CD4-positive, alpha-beta T cell (primary cell): ENCODE measurements at regions of chr16 and their contacts with region 1.

Region 1: DNA sequence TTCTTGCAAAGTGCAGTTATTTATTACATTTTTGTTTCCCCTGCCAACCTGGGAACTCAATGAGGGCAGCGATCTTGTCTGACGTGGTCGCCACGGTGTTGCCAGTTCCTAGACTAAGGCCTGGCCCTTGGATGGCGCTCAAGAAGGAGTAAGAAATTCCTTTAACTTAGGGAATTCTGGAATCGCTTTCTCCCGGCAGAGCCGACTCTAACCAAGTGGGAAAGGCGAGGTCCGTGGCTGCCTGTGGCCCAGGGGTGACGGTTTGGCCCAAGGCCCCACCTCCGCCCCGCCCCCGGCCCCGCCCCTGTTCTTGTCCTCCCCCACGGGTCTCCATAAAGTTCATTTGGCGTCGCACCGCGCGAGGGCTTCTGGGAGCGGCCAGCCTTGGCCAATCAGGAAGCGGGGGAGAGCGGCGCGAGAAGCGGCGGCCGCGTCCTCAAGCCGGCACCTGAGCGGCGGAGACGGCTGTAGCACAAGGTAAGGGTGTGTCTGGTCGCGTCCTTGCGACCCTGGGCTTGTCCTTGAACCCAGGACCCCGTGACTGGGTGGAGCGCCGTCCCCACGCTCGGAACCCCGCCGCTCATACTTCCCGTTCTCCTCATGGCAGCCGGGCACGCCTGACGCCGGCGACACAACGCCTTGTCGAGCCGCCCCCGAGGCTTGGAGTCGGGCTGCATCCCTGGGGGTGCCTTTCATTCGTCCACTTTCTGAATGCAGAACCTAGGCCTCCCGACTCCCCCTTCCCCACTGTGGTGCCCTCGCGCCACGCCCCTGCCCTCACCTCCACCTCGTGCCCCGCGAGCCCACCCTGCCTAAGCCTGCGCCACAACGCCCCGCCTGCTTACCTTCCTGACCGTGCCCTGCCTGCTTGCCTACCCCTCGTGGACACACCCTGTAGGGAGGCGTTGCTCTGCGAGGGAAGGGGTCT is at the start of gene NUP93:
- DNase-seq: peak; percentile 81 to 96 (median 87)
- ATAC-seq: peak; percentile 93
- H3K4me3 ChIP-seq: peak within 1 kb of the TSS; percentile 99
- H3K4me3 Mint-ChIP-seq: no peak within 1 kb of the TSS
- H3K27ac ChIP-seq: peak within 1 kb of the TSS; percentile 44 to 57
- H3K27ac Mint-ChIP-seq: peak within 1 kb of the TSS; percentile 93
- H3K4me1 ChIP-seq: peaks cover 26% of the 10 kb centered on the region
- H3K4me1 Mint-ChIP-seq: peaks cover 34% of the 10 kb centered on the region
- H3K27me3 ChIP-seq: no peaks in the 10 kb centered on the region
- H3K27me3 Mint-ChIP-seq: no peaks in the 10 kb centered on the region
- CTCF ChIP-seq: no peak
- total RNA-seq, gene NUP93: 45.6 to 47.2 TPM

Region 2: GRCh38 chr16:56450986-56451752 is 278.8 kb before region 1 on chr16 and contains the starts of genes NUDT21 and OGFOD1:
- CTCF ChIA-PET with region 1: no interaction called
- POLR2A ChIA-PET with region 1: interaction called, 3 read pairs
- intact Hi-C with region 1: loop called in 1 of 2 experiments (anchors 5 kb)
- DNase-seq: peak; percentile 81 to 98 (median 88)
- ATAC-seq: peak; percentile 98
- H3K4me3 ChIP-seq: peak within 1 kb of the TSS; percentile 91
- H3K4me3 Mint-ChIP-seq: peak within 1 kb of the TSS; percentile 92
- H3K27ac ChIP-seq: peak within 1 kb of the TSS; percentile 58 to 80
- H3K27ac Mint-ChIP-seq: peak within 1 kb of the TSS; percentile 83
- H3K4me1 ChIP-seq: peaks cover 20% of the 10 kb centered on the region
- H3K4me1 Mint-ChIP-seq: peaks cover 70% of the 10 kb centered on the region
- H3K27me3 ChIP-seq: no peaks in the 10 kb centered on the region
- H3K27me3 Mint-ChIP-seq: no peaks in the 10 kb centered on the region
- CTCF ChIP-seq: no peak
- total RNA-seq, gene NUDT21: 89.6 to 96.6 TPM
- total RNA-seq, gene OGFOD1: 14.6 to 14.8 TPM

Region 3: GRCh38 chr16:56681939-56682702 is 47.9 kb before region 1 on chr16 and contains the start of gene MT1X:
- CTCF ChIA-PET with region 1: no interaction called
- POLR2A ChIA-PET with region 1: interaction called, 5 read pairs
- intact Hi-C with region 1: loop called in 1 of 2 experiments (anchors 2 kb)
- DNase-seq: peak; percentile 72 to 94 (median 86)
- ATAC-seq: peak; percentile 99
- H3K4me3 ChIP-seq: peak within 1 kb of the TSS; percentile 83
- H3K4me3 Mint-ChIP-seq: peak within 1 kb of the TSS; percentile 96
- H3K27ac ChIP-seq: peak within 1 kb of the TSS; percentile 50 to 71
- H3K27ac Mint-ChIP-seq: peak within 1 kb of the TSS; percentile 93
- H3K4me1 ChIP-seq: peaks cover 28% of the 10 kb centered on the region
- H3K4me1 Mint-ChIP-seq: peaks cover 27% of the 10 kb centered on the region
- H3K27me3 ChIP-seq: no peaks in the 10 kb centered on the region
- H3K27me3 Mint-ChIP-seq: no peaks in the 10 kb centered on the region
- CTCF ChIP-seq: no peak
- total RNA-seq, gene MT1X: 10.9 to 14.1 TPM

Region 4: GRCh38 chr16:56708525-56709442 is 21.2 kb before region 1 on chr16:
- CTCF ChIA-PET with region 1: no interaction called
- POLR2A ChIA-PET with region 1: interaction called, 16 read pairs
- intact Hi-C with region 1: loop called in 1 of 2 experiments (anchors 2 kb)
- DNase-seq: peak in 13 of 14 experiments; percentile 10 to 63 (median 41)
- ATAC-seq: peak; percentile 90
- H3K4me3 ChIP-seq: peak overlapping the region; percentile 35
- H3K4me3 Mint-ChIP-seq: peak overlapping the region; percentile 83
- H3K27ac ChIP-seq: peak overlapping the region in 1 of 2 donors; percentile 50
- H3K27ac Mint-ChIP-seq: peak overlapping the region; percentile 92
- H3K4me1 ChIP-seq: peaks cover 26% of the 10 kb centered on the region
- H3K4me1 Mint-ChIP-seq: peaks cover 28% of the 10 kb centered on the region
- H3K27me3 ChIP-seq: no peaks in the 10 kb centered on the region
- H3K27me3 Mint-ChIP-seq: no peaks in the 10 kb centered on the region
- CTCF ChIP-seq: no peak

Region 5: DNA sequence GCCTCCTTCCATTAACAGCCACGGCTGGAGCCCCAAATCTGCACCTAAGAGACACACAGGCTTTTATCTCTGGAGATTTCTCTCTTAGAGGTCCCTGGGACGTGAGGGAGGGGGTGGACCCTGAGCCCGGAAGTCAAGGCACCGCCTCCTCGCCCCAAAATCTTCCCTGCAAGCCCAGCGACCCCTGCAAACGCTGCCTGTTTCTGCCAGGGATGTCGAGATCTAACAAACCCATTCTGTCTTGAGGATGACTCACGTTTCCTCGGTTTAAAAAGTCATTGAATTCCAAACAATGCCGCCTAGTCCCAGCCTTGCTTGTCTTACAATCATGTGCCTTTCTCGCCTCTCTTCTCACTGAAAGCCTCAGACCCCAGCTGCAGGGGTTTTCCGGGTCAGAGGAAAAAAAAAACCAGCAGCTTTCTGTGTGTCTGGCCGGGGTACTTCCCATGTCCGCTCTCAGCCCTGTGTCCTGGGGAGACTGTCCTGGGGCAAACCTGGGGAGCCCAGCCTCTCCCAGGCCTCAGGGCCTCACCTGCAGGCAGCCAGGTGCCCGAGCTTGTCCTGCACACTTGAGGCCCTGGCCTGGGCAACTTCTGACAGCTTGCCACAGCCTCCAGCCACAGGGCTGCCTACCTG is 530.4 kb after region 1 on chr16:
- CTCF ChIA-PET with region 1: no interaction called
- POLR2A ChIA-PET with region 1: no interaction called
- intact Hi-C with region 1: loop called in 1 of 2 experiments (anchors 10 kb)
- DNase-seq: peak in 10 of 14 experiments; percentile 13 to 76 (median 40)
- ATAC-seq: peak; percentile 67
- H3K4me3 ChIP-seq: no peak overlapping the region
- H3K4me3 Mint-ChIP-seq: peak overlapping the region; percentile 68
- H3K27ac ChIP-seq: no peak overlapping the region
- H3K27ac Mint-ChIP-seq: peak overlapping the region; percentile 90
- H3K4me1 ChIP-seq: peaks cover 29% of the 10 kb centered on the region
- H3K4me1 Mint-ChIP-seq: peaks cover 23% of the 10 kb centered on the region
- H3K27me3 ChIP-seq: no peaks in the 10 kb centered on the region
- H3K27me3 Mint-ChIP-seq: no peaks in the 10 kb centered on the region
- CTCF ChIP-seq: no peak

Region 6: GRCh38 chr16:57300387-57301125 is 570.6 kb after region 1 on chr16:
- CTCF ChIA-PET with region 1: no interaction called
- POLR2A ChIA-PET with region 1: no interaction called
- intact Hi-C with region 1: no loop called
- DNase-seq: peak; percentile 97 to 100 (median 99)
- ATAC-seq: peak; percentile 91
- H3K4me3 ChIP-seq: peak overlapping the region; percentile 58
- H3K4me3 Mint-ChIP-seq: no peak overlapping the region
- H3K27ac ChIP-seq: peak overlapping the region; percentile 50 to 79
- H3K27ac Mint-ChIP-seq: no peak overlapping the region
- H3K4me1 ChIP-seq: peaks cover 54% of the 10 kb centered on the region
- H3K4me1 Mint-ChIP-seq: peaks cover 16% of the 10 kb centered on the region
- H3K27me3 ChIP-seq: no peaks in the 10 kb centered on the region
- H3K27me3 Mint-ChIP-seq: no peaks in the 10 kb centered on the region
- CTCF ChIP-seq: peak; percentile 88